ENCODE measurements at regions of chr5 and their contacts with region 1.

Region 1: DNA sequence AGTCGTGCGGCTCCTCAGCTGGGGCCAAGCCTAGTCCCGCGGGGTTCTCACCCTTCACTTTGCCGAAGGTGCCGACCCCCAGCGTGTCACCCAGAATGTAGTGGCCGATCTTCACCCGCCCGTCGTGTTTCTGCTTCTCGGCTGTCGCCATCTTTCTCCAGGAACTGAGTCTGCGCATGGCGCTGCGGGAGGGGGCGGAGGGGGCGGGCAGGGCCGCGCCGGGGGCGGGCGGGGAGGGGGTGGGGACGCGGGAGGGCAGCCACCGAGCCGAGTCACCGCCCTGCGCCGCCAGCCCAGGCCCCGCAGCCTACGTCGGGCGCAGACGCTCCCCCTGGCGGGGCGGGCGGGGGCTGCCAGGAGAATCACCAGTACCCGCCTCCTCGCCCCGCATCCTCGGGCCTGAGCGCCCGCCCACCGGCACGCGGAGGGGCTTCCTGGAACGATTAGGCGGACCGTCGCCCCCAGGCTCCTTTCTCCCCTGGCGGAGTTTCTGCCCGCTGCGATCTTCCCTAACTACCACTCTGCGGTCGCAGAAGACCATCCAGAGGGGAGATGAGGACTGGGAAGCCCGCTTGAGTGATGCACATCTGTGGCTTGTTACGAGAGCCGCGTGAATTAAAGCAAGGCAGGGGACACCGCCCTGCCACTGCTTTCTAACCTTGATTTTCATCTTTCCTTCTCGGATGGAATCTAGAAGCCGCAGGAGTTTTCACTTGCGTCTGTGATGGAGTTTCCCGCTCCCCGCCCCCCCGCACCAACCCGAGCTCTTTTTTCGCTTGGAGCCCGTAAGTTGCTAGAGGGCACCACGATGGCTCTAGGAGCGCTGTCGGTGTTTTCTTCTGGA is at the start of gene PRKAA1:
- DNase-seq: peak; percentile 92 to 95
- ATAC-seq: peak; percentile 93 to 99 (median 95)
- H3K4me3 ChIP-seq: peak within 1 kb of the TSS; percentile 97
- H3K4me3 Mint-ChIP-seq: peak within 1 kb of the TSS; percentile 92
- H3K27ac ChIP-seq: peak within 1 kb of the TSS; percentile 96
- H3K27ac Mint-ChIP-seq: peak within 1 kb of the TSS; percentile 89 to 95
- H3K4me1 ChIP-seq: peaks cover 8% of the 10 kb centered on the region
- H3K4me1 Mint-ChIP-seq: peaks cover 43% of the 10 kb centered on the region in 2 donors
- H3K27me3 ChIP-seq: no peaks in the 10 kb centered on the region
- H3K27me3 Mint-ChIP-seq: peaks cover 0 to 7% of the 10 kb centered on the region in 2 donors
- CTCF ChIP-seq: peak; percentile 73
- total RNA-seq, gene PRKAA1: 120 to 165 (median 122) TPM

Region 2: GRCh38 chr5:40834849-40835787 is 36.9 kb after region 1 on chr5 and contains the start of gene RPL37:
- intact Hi-C with region 1: loop called (anchors 1 kb)
- DNase-seq: peak; percentile 82 to 96
- ATAC-seq: peak; percentile 94 to 98 (median 96)
- H3K4me3 ChIP-seq: peak within 1 kb of the TSS; percentile 86
- H3K4me3 Mint-ChIP-seq: peak within 1 kb of the TSS; percentile 97
- H3K27ac ChIP-seq: peak within 1 kb of the TSS; percentile 96
- H3K27ac Mint-ChIP-seq: peak within 1 kb of the TSS; percentile 96 to 99
- H3K4me1 ChIP-seq: peaks cover 17% of the 10 kb centered on the region
- H3K4me1 Mint-ChIP-seq: peaks cover 48 to 54% of the 10 kb centered on the region in 2 donors
- H3K27me3 ChIP-seq: no peaks in the 10 kb centered on the region
- H3K27me3 Mint-ChIP-seq: no peaks in the 10 kb centered on the region
- CTCF ChIP-seq: no peak
- total RNA-seq, gene RPL37: 961 to 1,288 (median 1,179) TPM

Region 3: GRCh38 chr5:40860711-40861110 is 62.5 kb after region 1 on chr5:
- intact Hi-C with region 1: no loop called
- DNase-seq: no peak
- ATAC-seq: no peak
- H3K4me3 ChIP-seq: no peak overlapping the region
- H3K4me3 Mint-ChIP-seq: no peak overlapping the region
- H3K27ac ChIP-seq: no peak overlapping the region
- H3K27ac Mint-ChIP-seq: no peak overlapping the region
- H3K4me1 ChIP-seq: no peaks in the 10 kb centered on the region
- H3K4me1 Mint-ChIP-seq: no peaks in the 10 kb centered on the region
- H3K27me3 ChIP-seq: no peaks in the 10 kb centered on the region
- H3K27me3 Mint-ChIP-seq: no peaks in the 10 kb centered on the region
- CTCF ChIP-seq: no peak

Region 4: GRCh38 chr5:41289970-41290464 is 491.8 kb after region 1 on chr5:
- intact Hi-C with region 1: no loop called
- DNase-seq: no peak
- ATAC-seq: peak in 1 of 3 donors; percentile 17
- H3K4me3 ChIP-seq: no peak overlapping the region
- H3K4me3 Mint-ChIP-seq: no peak overlapping the region
- H3K27ac ChIP-seq: no peak overlapping the region
- H3K27ac Mint-ChIP-seq: no peak overlapping the region
- H3K4me1 ChIP-seq: no peaks in the 10 kb centered on the region
- H3K4me1 Mint-ChIP-seq: no peaks in the 10 kb centered on the region
- H3K27me3 ChIP-seq: no peaks in the 10 kb centered on the region
- H3K27me3 Mint-ChIP-seq: no peaks in the 10 kb centered on the region
- CTCF ChIP-seq: no peak